ENCODE measurements at regions of chr2 and their contacts with region 1.

Region 1: GRCh38 chr2:1750933-1751766 is 6.8 kb upstream of the PXDN start:
- H3K4me3 ChIP-seq: no peak overlapping the region
- H3K27ac ChIP-seq: no peak overlapping the region
- H3K4me1 ChIP-seq: no peaks in the 10 kb centered on the region; the same call in 1 of the 2 replicates
- CTCF ChIP-seq: peak; percentile 79

Region 2: GRCh38 chr2:1739961-1740715 is 11.0 kb before region 1 on chr2:
- CTCF ChIA-PET with region 1: interaction called, 12 read pairs
- POLR2A ChIA-PET with region 1: no interaction called
- H3K4me3 ChIP-seq: no peak overlapping the region
- H3K27ac ChIP-seq: no peak overlapping the region
- H3K4me1 ChIP-seq: no peaks in the 10 kb centered on the region
- CTCF ChIP-seq: no peak